ENCODE measurements at regions of chr3 and their contacts with region 1.

Region 1: GRCh38 chr3:52056968-52057805 is 816 bp upstream of the DUSP7 start:
- DNase-seq: peak; percentile 90
- ATAC-seq: peak; percentile 85
- H3K4me3 ChIP-seq: peak overlapping the region; percentile 73
- H3K27ac ChIP-seq: peak overlapping the region; percentile 83
- H3K4me1 ChIP-seq: peaks cover 33% of the 10 kb centered on the region
- H3K27me3 ChIP-seq: no peaks in the 10 kb centered on the region
- CTCF ChIP-seq: peak in 1 of 3 experiments; percentile 12; a peak in 1 of 6 replicates
- EP300 ChIP-seq: no peak
- POLR2A ChIP-seq: peak; percentile 56; the same call in 1 of the 2 replicates
- RAD21 ChIP-seq: no peak

Region 2: GRCh38 chr3:51982782-51983577 is 74.2 kb before region 1 on chr3 and contains the start of gene ACY1:
- CTCF ChIA-PET with region 1: interaction called, 19 read pairs
- POLR2A ChIA-PET with region 1: interaction called, 6 read pairs
- RAD21 ChIA-PET with region 1: interaction called, 8 read pairs
- SMC1A ChIA-PET with region 1: no interaction called
- in situ Hi-C with region 1: no loop called
- intact Hi-C with region 1: no loop called
- DNase-seq: peak; percentile 43
- ATAC-seq: peak; percentile 92
- H3K4me3 ChIP-seq: peak within 1 kb of the TSS; percentile 97
- H3K27ac ChIP-seq: peak within 1 kb of the TSS; percentile 73
- H3K4me1 ChIP-seq: peaks cover 8% of the 10 kb centered on the region
- H3K27me3 ChIP-seq: no peaks in the 10 kb centered on the region
- CTCF ChIP-seq: no peak
- EP300 ChIP-seq: no peak
- POLR2A ChIP-seq: peak; percentile 81; the same call in 1 of the 2 replicates
- RAD21 ChIP-seq: no peak
- polyA plus RNA-seq, gene ACY1: 19.8 to 28.2 TPM

Region 3: GRCh38 chr3:52014613-52015012 is 42.6 kb before region 1 on chr3:
- CTCF ChIA-PET with region 1: interaction called, 334 read pairs
- POLR2A ChIA-PET with region 1: interaction called, 5 read pairs
- RAD21 ChIA-PET with region 1: interaction called, 70 read pairs
- SMC1A ChIA-PET with region 1: interaction called, 116 read pairs
- in situ Hi-C with region 1: no loop called
- intact Hi-C with region 1: no loop called
- DNase-seq: no peak
- ATAC-seq: peak; percentile 22
- H3K4me3 ChIP-seq: no peak overlapping the region
- H3K27ac ChIP-seq: no peak overlapping the region
- H3K4me1 ChIP-seq: peaks cover 4% of the 10 kb centered on the region
- H3K27me3 ChIP-seq: no peaks in the 10 kb centered on the region
- CTCF ChIP-seq: 0 out of 6 replicates have a peak, but pooled peaks of 1 of the 3 experiments have one; percentile 17
- EP300 ChIP-seq: no peak
- POLR2A ChIP-seq: no peak
- RAD21 ChIP-seq: peak; percentile 3; the same call in 1 of the 2 replicates

Region 4: GRCh38 chr3:52086921-52087663 is 29.9 kb after region 1 on chr3:
- CTCF ChIA-PET with region 1: interaction called, 8 read pairs
- POLR2A ChIA-PET with region 1: interaction called, 6 read pairs
- RAD21 ChIA-PET with region 1: interaction called, 18 read pairs
- SMC1A ChIA-PET with region 1: interaction called, 4 read pairs
- in situ Hi-C with region 1: no loop called
- intact Hi-C with region 1: no loop called
- DNase-seq: no peak
- ATAC-seq: peak; percentile 22
- H3K4me3 ChIP-seq: no peak overlapping the region
- H3K27ac ChIP-seq: peak overlapping the region; percentile 58
- H3K4me1 ChIP-seq: peaks cover 25% of the 10 kb centered on the region
- H3K27me3 ChIP-seq: no peaks in the 10 kb centered on the region
- CTCF ChIP-seq: no peak
- EP300 ChIP-seq: no peak
- POLR2A ChIP-seq: no peak
- RAD21 ChIP-seq: no peak

Region 5: DNA sequence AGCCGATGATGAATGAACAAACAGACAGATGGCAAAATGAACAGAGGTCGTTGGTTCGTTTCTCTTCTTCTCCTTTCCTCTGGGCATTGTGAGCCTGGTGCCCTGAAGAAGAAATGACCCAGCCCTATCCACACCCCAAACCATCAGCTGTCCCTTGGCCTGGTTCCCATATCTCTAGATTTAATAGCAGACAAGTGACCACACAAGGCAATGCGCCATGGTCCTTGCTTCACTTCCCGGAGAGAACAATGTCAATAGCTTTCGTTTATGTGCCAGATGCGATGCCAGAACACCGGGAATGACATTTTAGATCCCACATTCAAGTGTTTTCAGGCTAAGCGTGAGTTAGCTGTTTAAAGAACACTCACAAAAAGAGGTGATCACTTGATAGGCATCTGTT is 79.3 kb after region 1 on chr3:
- CTCF ChIA-PET with region 1: interaction called, 34 read pairs
- POLR2A ChIA-PET with region 1: interaction called, 3 read pairs
- RAD21 ChIA-PET with region 1: interaction called, 10 read pairs
- SMC1A ChIA-PET with region 1: interaction called, 6 read pairs
- in situ Hi-C with region 1: no loop called
- intact Hi-C with region 1: no loop called
- DNase-seq: no peak
- ATAC-seq: no peak
- H3K4me3 ChIP-seq: no peak overlapping the region
- H3K27ac ChIP-seq: no peak overlapping the region
- H3K4me1 ChIP-seq: peaks cover 21% of the 10 kb centered on the region
- H3K27me3 ChIP-seq: no peaks in the 10 kb centered on the region
- CTCF ChIP-seq: no peak
- EP300 ChIP-seq: no peak
- POLR2A ChIP-seq: no peak
- RAD21 ChIP-seq: no peak

Region 6: GRCh38 chr3:52873433-52874159 is 816.4 kb after region 1 on chr3:
- CTCF ChIA-PET with region 1: no interaction called
- POLR2A ChIA-PET with region 1: no interaction called
- RAD21 ChIA-PET with region 1: no interaction called
- SMC1A ChIA-PET with region 1: no interaction called
- in situ Hi-C with region 1: no loop called
- intact Hi-C with region 1: no loop called
- DNase-seq: no peak
- ATAC-seq: no peak
- H3K4me3 ChIP-seq: no peak overlapping the region
- H3K27ac ChIP-seq: no peak overlapping the region
- H3K4me1 ChIP-seq: peaks cover 7% of the 10 kb centered on the region; the same call in 1 of the 2 replicates
- H3K27me3 ChIP-seq: no peaks in the 10 kb centered on the region
- CTCF ChIP-seq: no peak
- EP300 ChIP-seq: no peak
- POLR2A ChIP-seq: no peak
- RAD21 ChIP-seq: no peak

Measured in GM12878 (cell line).